GM10248 (cell line): ENCODE measurements at regions of chr18 and their contacts with region 1.

Region 1: DNA sequence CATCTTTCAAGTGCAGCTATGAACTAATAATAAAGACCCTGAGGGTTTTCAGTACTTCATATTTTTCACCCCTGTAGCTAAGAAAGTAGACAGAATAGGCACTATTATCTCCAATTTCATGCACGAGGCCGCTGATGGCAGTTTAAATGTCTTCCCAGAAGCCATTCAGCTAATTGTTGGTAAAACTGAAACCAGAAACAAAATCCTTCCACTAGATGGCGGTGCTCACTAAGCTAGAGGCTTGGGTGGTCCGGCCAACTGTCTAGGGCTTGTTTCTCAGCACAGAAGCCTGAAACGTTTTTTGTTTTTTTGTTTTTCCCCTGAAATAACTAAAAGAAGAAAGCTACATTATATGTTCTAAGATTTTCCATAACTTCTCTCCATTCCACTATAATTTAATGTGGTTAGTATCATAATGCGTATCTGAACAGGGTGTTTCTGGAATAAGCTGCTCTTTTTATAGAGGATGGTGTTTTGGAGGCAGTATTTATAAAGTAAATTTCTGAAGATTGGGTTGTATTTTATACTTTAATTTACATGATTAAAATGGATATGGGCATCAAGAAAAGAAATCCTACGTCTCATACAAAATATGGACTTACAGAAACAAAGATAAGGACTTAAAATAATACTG is 159.4 kb downstream of the PIK3C3 start:
- DNase-seq: peak; percentile 29
- CTCF ChIP-seq: peak; percentile 60

Region 2: GRCh38 chr18:41886126-41886807 is 228.2 kb before region 1 on chr18:
- CTCF ChIA-PET with region 1: no interaction called
- POLR2A ChIA-PET with region 1: no interaction called
- DNase-seq: no peak
- CTCF ChIP-seq: no peak

Region 3: DNA sequence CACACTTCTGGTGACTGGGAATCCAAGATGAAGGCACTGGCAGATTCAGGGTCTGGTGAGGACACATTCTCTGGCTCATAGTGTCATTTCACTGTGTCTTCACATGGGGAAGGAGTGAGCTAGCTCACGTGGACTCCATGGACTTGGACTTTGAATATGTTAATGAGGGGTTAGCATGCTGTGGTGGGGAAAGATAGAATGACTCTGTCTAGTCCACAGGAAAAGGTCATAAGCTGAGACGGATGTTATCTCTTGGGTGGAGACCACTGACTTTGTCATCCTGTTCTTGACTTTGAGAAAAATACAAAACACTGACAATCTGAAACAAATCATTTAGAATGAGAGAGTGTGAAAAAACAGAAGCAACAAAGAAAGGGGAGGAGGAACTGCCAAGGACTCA is 13.5 kb before region 1 on chr18:
- CTCF ChIA-PET with region 1: interaction called, 23 read pairs
- POLR2A ChIA-PET with region 1: no interaction called
- DNase-seq: no peak
- CTCF ChIP-seq: no peak

Region 4: DNA sequence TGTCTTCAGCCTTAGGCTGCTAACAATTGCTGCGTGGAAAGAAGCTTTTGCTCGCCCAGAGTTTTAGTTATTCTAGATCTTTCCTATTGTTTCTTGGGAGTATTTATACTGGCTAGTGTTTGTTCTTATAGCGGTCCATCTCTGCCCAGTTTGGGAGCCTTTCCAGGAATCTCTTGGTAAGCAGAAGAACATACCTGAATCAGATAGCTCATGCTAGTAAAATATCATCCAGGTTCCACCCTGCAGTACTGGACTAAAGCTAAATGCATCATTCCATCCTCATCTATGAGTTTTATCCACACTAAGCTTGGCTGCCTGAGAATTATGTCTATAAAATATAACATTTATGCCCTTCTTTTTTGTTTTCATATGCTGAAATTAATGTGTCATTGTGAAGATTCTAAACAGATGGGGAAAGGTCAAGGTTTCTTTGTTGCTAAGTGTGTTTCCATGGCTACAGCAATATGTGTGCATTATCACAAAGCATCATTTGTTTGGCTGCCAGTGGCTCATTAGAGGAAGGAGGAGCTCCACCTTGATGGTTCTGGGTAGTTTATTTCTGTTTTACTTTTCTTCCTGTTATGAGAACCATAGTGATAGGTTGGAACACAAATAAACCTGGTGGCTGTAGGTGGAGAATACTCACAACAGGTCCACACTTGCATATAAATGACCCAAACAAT is 23.4 kb after region 1 on chr18:
- CTCF ChIA-PET with region 1: interaction called, 11 read pairs
- POLR2A ChIA-PET with region 1: no interaction called
- DNase-seq: no peak
- CTCF ChIP-seq: no peak

Region 5: DNA sequence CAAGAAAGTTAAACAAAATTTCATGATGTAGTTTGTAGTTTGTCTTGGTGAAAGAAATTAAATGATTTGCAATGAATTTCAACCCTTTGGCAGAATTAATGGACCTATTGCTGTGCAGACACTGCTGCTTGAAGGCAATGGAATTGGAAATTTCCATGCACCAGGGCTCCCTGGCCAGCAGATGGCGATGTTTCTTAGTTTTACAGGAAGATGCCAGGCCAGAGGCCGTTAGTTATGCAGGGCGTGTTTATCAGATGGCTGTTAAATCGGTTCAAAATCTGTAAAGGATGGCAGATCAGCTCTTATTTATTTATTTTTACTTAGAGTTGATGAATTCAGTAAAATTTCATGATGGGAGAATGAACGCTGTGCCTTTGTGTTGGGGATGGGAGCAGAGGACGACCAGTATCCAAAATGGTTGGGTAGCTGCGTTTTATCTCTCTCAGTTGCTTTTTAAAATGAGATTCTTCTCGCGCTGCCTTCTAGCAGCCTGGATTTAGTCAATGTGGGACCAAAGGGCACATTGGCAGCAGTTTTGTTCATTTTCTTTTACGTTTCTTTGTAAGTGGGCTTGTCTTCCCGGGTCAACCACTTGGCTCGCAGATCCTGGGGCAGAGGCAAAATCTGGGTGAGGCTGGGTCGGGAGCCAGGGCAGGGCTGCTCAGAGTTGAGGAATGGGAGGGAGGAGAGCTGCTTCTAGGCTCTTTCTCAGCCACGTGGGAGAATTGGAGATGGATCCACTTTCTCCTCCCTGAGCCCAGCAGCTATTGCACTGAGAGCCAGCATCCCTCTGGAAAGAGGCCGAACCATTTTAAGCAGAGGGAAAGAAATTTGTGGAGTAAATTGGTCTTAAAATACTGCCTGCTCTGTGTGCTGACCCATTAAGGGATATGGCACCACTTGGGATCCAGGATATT is 184.6 kb after region 1 on chr18:
- CTCF ChIA-PET with region 1: interaction called, 12 read pairs
- POLR2A ChIA-PET with region 1: no interaction called
- DNase-seq: peak; percentile 56
- CTCF ChIP-seq: peak; percentile 82

Region 6: DNA sequence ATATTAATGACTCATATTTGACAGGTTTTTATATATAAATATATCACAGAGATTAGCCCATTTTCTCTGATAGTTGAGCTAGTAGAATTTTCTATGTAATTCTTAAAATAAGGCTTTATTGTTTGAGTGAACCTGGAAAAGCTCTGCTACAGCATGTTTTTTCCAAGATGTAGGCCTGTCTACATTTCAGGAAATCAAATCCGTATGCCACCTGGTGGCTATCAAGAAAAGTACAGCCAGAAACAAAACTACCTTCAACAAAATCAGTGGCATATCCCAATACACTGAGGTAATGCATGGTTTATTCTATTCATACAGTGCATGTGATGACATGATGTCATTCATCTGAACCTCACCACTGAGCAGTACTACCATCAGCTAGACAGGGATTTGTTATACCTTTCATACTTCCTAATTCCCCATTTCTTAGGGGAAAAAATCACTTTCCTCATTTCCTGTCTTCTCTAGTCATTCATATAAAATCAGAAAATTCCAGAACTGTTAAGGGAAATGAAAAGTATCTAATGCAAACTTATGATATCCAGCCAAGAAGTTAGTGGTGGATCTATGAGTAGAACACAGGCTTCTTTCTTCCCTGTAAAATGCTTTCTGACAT is 1473.2 kb after region 1 on chr18:
- CTCF ChIA-PET with region 1: interaction called, 10 read pairs
- POLR2A ChIA-PET with region 1: no interaction called
- DNase-seq: peak; percentile 31
- CTCF ChIP-seq: peak; percentile 44